HEK293 (cell line): ENCODE measurements at regions of chr14 and their contacts with region 1.

Region 1: DNA sequence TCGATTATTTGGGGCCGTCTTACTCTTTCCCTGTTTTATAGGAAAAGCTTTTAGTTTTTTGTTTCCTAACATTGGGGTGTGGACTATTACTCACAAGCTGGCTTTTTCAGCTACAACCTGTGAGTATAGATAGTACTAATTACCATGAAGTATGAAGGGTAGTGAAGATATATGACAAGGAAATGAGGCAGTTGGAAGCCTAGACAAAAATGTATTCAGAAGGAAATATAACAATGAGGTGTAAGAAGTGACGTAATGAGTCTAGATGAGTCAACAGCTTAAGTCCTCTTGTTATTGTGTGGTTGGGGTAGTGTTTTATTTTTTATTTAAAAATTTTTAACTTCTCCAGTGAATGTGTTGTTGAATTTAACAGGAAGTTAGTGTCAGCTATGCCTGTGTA is 804.5 kb downstream of the NRXN3 start:
- H3K4me3 ChIP-seq: no peak overlapping the region
- H3K27ac ChIP-seq: no peak overlapping the region
- H3K4me1 ChIP-seq: no peaks in the 10 kb centered on the region
- CTCF ChIP-seq: no peak

Region 2: DNA sequence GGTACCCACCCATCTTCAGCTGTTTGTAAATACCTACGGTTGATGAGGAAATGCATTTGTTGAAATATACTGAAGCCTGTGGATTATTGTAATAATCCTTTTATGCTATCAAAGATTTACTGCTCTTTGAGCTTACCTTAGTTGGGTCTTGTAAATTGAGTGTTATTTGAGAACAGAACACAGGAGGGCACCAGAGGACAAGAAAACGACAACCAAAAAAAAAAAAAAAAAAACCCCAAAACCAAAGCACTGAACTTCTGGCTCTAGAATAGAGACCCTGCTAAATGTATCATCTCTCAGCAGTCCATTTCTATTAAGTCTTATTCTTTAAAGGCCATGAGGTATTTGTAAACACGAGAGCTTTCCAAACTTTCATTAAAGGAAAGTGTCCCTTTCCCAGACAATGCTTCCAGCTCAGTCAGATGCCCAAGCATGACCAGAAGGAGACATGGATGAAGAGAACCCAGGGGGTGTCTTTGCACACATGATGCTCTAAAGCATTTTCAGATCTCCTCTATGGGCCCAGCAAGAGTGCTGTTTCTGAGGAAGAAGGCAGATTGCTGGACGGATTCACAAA is 40.7 kb before region 1 on chr14:
- CTCF ChIA-PET with region 1: no interaction called
- POLR2A ChIA-PET with region 1: no interaction called
- H3K4me3 ChIP-seq: no peak overlapping the region
- H3K27ac ChIP-seq: no peak overlapping the region
- H3K4me1 ChIP-seq: no peaks in the 10 kb centered on the region
- CTCF ChIP-seq: peak; percentile 34; the same call in 1 of the 2 replicates

Region 3: GRCh38 chr14:78959674-78960264 is 14.9 kb before region 1 on chr14:
- CTCF ChIA-PET with region 1: interaction called, 12 read pairs
- POLR2A ChIA-PET with region 1: no interaction called
- H3K4me3 ChIP-seq: no peak overlapping the region
- H3K27ac ChIP-seq: no peak overlapping the region
- H3K4me1 ChIP-seq: no peaks in the 10 kb centered on the region
- CTCF ChIP-seq: 0 out of 2 replicates have a peak, but pooled peaks have one; percentile 17